Mammary epithelial cell (primary cell): ENCODE measurements at regions of chr10 and their contacts with region 1.

Region 1: GRCh38 chr10:84205049-84205852 is 10.9 kb downstream of the CDHR1 start:
- DNase-seq: peak; percentile 42
- H3K4me3 ChIP-seq: no peak overlapping the region
- H3K27ac ChIP-seq: no peak overlapping the region
- H3K4me1 ChIP-seq: no peaks in the 10 kb centered on the region
- H3K27me3 ChIP-seq: no peaks in the 10 kb centered on the region
- CTCF ChIP-seq: peak; percentile 99

Region 2: DNA sequence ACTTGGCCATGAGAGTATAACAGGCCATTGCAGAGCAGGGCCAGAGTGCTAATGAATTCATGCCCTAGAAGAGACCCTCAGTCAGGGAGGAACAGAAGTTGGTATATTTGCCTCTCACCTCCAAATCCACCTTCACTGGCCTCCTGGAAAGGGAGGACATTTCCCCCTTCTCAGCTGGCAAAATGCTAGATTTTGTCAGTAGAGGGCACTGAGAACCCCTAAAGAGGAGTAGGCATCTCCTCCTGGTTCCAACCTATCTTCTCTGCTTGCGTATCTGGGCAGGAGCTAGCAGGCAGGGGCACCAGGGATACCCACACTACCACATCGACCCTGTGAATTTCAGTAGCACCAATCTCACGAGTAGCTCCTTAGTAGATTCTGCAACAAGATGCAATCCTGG is 145.7 kb before region 1 on chr10:
- CTCF ChIA-PET with region 1: no interaction called
- dilution Hi-C with region 1: no loop called
- in situ Hi-C with region 1: no loop called
- intact Hi-C with region 1: loop called (anchors 1 kb)
- DNase-seq: no peak
- H3K4me3 ChIP-seq: no peak overlapping the region
- H3K27ac ChIP-seq: no peak overlapping the region
- H3K4me1 ChIP-seq: no peaks in the 10 kb centered on the region
- H3K27me3 ChIP-seq: no peaks in the 10 kb centered on the region
- CTCF ChIP-seq: peak in 1 of 2 donors; percentile 22

Region 3: GRCh38 chr10:84147347-84147746 is 57.9 kb before region 1 on chr10:
- CTCF ChIA-PET with region 1: no interaction called
- dilution Hi-C with region 1: loop called (anchors 5 kb)
- in situ Hi-C with region 1: no loop called
- intact Hi-C with region 1: loop called (anchors 1 kb)
- DNase-seq: no peak
- H3K4me3 ChIP-seq: no peak overlapping the region
- H3K27ac ChIP-seq: no peak overlapping the region
- H3K4me1 ChIP-seq: no peaks in the 10 kb centered on the region
- H3K27me3 ChIP-seq: no peaks in the 10 kb centered on the region
- CTCF ChIP-seq: no peak

Region 4: DNA sequence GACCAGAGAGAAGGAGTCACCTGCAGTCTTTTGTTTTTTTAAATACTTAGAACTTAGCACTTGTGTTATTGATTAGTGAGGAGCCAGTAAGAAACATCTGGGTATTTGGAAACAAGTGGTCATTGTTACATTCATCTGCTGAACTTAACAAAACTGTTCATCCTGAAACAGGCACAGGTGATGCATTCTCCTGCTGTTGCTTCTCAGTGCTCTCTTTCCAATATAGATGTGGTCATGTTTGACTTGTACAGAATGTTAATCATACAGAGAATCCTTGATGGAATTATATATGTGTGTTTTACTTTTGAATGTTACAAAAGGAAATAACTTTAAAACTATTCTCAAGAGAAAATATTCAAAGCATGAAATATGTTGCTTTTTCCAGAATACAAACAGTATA is 52.5 kb before region 1 on chr10:
- CTCF ChIA-PET with region 1: no interaction called
- dilution Hi-C with region 1: loop called (anchors 5 kb)
- in situ Hi-C with region 1: no loop called
- intact Hi-C with region 1: loop called (anchors 1 kb)
- DNase-seq: no peak
- H3K4me3 ChIP-seq: no peak overlapping the region
- H3K27ac ChIP-seq: no peak overlapping the region
- H3K4me1 ChIP-seq: no peaks in the 10 kb centered on the region
- H3K27me3 ChIP-seq: no peaks in the 10 kb centered on the region
- CTCF ChIP-seq: no peak

Region 5: GRCh38 chr10:84160663-84161362 is 44.4 kb before region 1 on chr10:
- CTCF ChIA-PET with region 1: no interaction called
- dilution Hi-C with region 1: no loop called
- in situ Hi-C with region 1: loop called (anchors 5 kb)
- intact Hi-C with region 1: loop called (anchors 1 kb)
- DNase-seq: no peak
- H3K4me3 ChIP-seq: no peak overlapping the region
- H3K27ac ChIP-seq: no peak overlapping the region
- H3K4me1 ChIP-seq: no peaks in the 10 kb centered on the region
- H3K27me3 ChIP-seq: no peaks in the 10 kb centered on the region
- CTCF ChIP-seq: peak; percentile 11 to 41

Region 6: DNA sequence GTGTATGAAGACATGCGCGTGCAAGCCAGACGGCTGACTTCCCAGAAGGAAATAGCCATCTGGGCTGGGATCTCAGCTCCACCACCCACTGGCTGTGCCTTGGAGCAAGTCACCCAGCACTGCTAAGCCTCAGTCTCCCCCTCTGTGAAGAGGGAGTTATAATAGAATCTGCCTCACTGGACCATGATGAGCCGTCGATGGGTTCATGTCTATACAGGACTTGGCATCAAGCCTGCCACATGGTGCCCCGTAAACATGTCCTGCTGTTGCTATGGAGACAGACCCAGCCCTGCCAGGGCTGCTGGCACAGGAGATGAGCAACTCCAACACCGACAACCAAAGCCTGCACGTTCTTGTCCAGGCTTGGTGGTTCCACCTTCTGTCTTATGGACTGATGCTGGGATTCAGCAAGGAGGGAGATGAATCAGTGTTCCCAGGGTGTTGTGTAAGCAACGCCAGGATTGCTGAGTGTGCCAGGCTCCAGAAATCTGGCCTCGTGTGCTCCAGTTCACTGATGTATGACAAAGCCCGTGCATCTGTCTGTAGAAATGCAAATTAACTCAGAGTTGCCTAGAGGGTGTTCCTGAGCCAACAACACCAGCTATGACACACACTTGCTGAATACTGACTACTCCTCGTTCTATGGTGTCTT is 26.1 kb before region 1 on chr10:
- CTCF ChIA-PET with region 1: no interaction called
- dilution Hi-C with region 1: no loop called
- in situ Hi-C with region 1: no loop called
- intact Hi-C with region 1: loop called (anchors 2 kb)
- DNase-seq: peak; percentile 100
- H3K4me3 ChIP-seq: no peak overlapping the region
- H3K27ac ChIP-seq: peak overlapping the region; percentile 91
- H3K4me1 ChIP-seq: peaks cover 21% of the 10 kb centered on the region
- H3K27me3 ChIP-seq: no peaks in the 10 kb centered on the region
- CTCF ChIP-seq: no peak